Esophagus squamous epithelium (tissue), 5 donors: ENCODE measurements at regions of chr15 and their contacts with region 1.

Region 1: GRCh38 chr15:42059661-42060476 is 34.5 kb downstream of the PLA2G4D start:
- DNase-seq: no peak
- H3K4me3 ChIP-seq: no peak overlapping the region
- H3K27ac ChIP-seq: no peak overlapping the region
- H3K4me1 ChIP-seq: peaks cover 7 to 24% (median 7%) of the 10 kb centered on the region in 3 donors
- H3K27me3 ChIP-seq: peaks cover 0 to 2% (median 0%) of the 10 kb centered on the region in 4 donors
- CTCF ChIP-seq: peak; percentile 87 to 97 (median 94)
- POLR2A ChIP-seq: no peak

Region 2: DNA sequence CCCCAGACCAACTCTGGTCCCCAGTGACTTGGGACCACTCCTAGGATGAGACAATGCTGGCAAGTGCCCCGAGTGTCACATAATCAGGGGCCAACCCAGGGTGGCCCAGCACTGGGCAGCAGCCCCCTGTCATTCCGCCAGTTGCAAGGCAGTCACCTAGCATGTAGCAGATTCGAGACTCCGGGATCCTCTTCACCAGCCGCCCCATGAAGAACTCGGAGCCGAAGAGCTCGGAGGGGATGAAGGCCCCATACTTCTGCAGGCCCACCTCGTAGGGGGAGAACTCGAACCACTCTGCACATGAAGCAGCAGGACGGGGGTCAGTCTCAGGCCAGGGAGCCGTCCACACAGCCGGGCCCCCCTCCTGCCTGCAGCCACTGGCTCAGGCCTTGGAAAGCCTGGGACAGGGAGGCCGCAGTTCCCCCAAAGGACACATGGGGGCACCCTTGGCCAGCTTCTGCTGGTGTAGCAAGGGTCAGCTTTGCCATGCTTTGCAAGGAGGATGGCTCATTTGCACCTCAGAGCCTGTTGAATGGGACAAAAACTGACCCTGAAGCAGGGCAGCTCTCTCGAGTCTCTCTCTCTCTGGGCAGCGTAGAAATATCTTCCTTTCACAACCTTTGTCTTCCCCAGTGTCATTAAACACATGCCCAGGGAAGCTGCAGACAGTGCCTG is 70.5 kb before region 1 on chr15:
- intact Hi-C with region 1: loop called (anchors 5 kb)
- DNase-seq: peak; percentile 7
- H3K4me3 ChIP-seq: no peak overlapping the region
- H3K27ac ChIP-seq: no peak overlapping the region
- H3K4me1 ChIP-seq: peaks cover 0 to 10% (median 0%) of the 10 kb centered on the region in 3 donors
- H3K27me3 ChIP-seq: peaks cover 0 to 8% (median 0%) of the 10 kb centered on the region in 4 donors
- CTCF ChIP-seq: peak; percentile 95 to 99 (median 98)
- POLR2A ChIP-seq: no peak

Region 3: DNA sequence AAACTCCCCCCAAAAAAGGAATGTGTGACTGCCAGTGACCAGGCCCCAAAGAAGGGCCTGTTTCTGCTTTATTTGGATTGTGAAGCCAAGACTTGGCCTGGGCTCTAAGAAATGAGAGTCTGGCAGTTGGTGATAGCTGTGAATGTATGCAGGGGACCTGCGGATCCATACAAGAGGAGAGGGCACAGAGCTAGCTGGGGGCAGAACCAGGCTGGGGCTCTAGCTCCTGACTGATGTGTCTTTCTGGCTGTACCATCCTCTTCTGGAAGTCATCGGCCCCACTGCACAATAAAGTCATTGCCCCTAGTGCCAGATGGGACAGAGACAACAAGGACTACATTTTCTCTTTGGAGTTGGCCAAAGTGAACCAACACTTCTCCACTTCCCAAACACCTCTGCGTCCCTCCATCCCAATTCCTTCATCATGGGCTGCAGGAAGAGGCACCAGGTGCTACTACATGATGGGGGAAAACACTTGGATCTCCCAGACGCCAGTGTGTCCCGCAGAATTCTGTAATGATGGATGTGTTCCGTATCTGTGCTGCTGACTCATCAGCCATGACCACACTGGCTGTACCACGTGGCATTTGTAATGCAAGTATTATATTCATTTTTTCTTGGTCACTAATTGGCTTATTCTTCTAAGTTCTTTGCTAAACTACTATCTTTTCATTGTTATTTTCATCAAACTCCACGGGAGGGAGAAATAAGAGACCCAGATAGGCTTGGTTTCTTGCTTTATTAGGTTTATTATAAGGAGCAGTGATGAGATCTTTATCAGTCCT is 98.3 kb after region 1 on chr15:
- intact Hi-C with region 1: no loop called
- DNase-seq: no peak
- H3K4me3 ChIP-seq: no peak overlapping the region
- H3K27ac ChIP-seq: no peak overlapping the region
- H3K4me1 ChIP-seq: peaks cover 6 to 57% (median 17%) of the 10 kb centered on the region in 3 donors
- H3K27me3 ChIP-seq: no peaks in the 10 kb centered on the region
- CTCF ChIP-seq: no peak
- POLR2A ChIP-seq: no peak